ENCODE measurements at regions of chr15 and their contacts with region 1.

Region 1: DNA sequence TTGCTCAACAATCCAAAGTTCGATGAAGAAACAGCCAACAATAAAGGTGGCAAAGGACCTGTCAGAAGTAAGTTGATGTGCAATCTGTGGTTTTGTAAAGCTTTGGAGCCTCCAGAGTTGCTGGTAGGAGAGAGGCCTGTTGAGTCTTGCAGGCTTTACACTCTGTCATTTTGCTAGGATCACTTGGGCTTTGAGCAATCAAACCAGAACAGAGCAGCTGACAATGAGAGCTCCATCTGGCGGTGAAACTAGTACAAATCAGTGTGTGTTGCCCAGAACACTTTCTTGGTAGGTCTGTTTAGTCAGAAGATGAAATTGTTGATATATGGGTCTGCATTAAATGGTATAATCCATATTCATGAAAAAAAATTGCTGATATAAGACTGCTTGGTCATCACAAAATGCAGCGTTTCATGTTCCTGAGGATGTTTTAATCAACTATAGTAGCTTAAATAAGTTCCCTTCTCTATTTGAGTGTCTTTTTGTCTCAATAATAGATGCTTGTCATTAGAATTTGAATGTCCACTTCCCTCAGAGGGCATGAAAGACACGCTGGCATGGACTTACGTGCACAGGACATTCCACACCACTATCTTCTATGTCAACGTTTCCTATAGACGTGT is 25.7 kb downstream of the TMOD2 start:
- DNase-seq: peak; percentile 67
- ATAC-seq: peak; percentile 79
- H3K4me3 Mint-ChIP-seq: no peak overlapping the region
- H3K27ac Mint-ChIP-seq: no peak overlapping the region
- H3K4me1 Mint-ChIP-seq: peaks cover 5% of the 10 kb centered on the region
- H3K27me3 Mint-ChIP-seq: no peaks in the 10 kb centered on the region
- CTCF ChIP-seq: peak; percentile 49

Region 2: DNA sequence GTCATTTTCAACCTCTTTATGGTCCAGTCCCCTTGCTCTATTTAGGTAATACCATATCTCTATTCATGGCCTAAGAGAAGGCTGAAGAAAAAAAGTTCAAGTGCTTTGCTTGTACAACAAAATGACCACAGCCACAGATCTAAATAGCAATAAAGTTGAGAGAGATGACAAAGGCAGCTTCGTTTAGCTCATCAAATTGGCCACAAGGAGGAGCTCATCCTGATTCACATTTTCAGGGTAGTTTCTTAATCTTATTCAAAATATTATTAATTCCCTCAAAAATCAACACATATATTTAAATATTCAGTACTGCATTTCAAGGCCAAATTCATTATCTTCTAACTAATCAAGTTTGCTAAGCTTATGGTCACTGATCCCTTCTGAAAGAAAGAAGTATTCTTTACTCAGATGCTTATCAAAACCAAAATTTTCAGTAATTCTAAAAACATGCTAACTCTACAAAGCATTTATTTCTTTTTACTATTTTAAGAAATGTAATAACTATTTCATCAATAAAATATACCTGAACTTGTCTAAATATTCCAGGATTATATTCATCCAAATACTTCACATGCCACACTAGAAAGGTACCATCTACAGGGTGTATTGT is 240.0 kb before region 1 on chr15:
- CTCF ChIA-PET with region 1: interaction called, 15 read pairs
- POLR2A ChIA-PET with region 1: no interaction called
- DNase-seq: no peak
- ATAC-seq: no peak
- H3K4me3 Mint-ChIP-seq: no peak overlapping the region
- H3K27ac Mint-ChIP-seq: no peak overlapping the region
- H3K4me1 Mint-ChIP-seq: no peaks in the 10 kb centered on the region
- H3K27me3 Mint-ChIP-seq: no peaks in the 10 kb centered on the region
- CTCF ChIP-seq: peak; percentile 35; the same call in 1 of the 2 replicates

Region 3: GRCh38 chr15:51681303-51681963 is 95.6 kb before region 1 on chr15 and contains the start of gene SCG3:
- CTCF ChIA-PET with region 1: interaction called, 22 read pairs
- POLR2A ChIA-PET with region 1: no interaction called
- DNase-seq: peak; percentile 99
- ATAC-seq: peak; percentile 98
- H3K4me3 Mint-ChIP-seq: peak within 1 kb of the TSS; percentile 90
- H3K27ac Mint-ChIP-seq: peak within 1 kb of the TSS; percentile 97
- H3K4me1 Mint-ChIP-seq: peaks cover 6% of the 10 kb centered on the region
- H3K27me3 Mint-ChIP-seq: no peaks in the 10 kb centered on the region
- CTCF ChIP-seq: no peak
- total RNA-seq, gene SCG3: 31.5 to 32.3 TPM (median 32.1 TPM) in 3 replicates

Region 4: DNA sequence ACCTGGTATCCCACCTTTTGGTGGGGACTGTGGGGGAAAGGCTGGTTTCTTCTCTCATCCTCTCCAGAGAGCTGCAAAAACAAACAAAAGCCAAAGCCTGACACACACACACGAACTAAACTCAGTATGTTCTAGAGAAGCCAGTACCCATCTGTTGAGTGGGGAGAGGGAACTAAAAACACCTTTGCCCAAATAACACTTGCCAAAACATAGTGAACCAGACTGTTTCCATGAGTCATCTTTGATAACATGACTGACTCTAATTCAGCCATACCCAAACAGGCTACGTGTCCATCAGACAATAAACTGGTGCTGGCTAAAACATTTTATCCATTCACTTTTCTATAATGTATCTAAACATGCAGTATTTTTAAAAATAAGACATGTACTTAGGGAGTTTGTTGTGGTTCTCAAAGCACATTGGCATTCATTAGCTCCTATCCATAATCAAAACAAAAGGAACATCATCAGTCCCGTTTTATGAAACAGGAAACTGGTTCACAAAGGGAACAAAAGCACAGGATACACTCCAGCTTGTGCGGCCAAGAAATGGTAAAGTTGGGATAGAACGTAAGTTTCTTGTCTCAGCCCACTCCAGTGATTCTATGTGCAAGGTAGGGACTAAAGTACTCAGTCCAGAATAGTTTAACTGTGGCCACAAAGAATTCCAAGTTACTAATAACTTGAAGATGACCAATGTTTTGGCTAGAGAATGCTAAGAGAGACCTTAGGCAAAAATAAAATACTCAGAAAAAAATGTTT is 55.7 kb before region 1 on chr15:
- CTCF ChIA-PET with region 1: no interaction called
- POLR2A ChIA-PET with region 1: no interaction called
- DNase-seq: no peak
- ATAC-seq: no peak
- H3K4me3 Mint-ChIP-seq: no peak overlapping the region
- H3K27ac Mint-ChIP-seq: no peak overlapping the region
- H3K4me1 Mint-ChIP-seq: peaks cover 25% of the 10 kb centered on the region
- H3K27me3 Mint-ChIP-seq: no peaks in the 10 kb centered on the region
- CTCF ChIP-seq: no peak

Region 5: GRCh38 chr15:51737280-51738017 is 39.6 kb before region 1 on chr15 and contains the start of gene LYSMD2:
- CTCF ChIA-PET with region 1: interaction called, 12 read pairs
- POLR2A ChIA-PET with region 1: no interaction called
- DNase-seq: peak; percentile 52
- ATAC-seq: peak; percentile 63
- H3K4me3 Mint-ChIP-seq: peak within 1 kb of the TSS; percentile 71
- H3K27ac Mint-ChIP-seq: no peak within 1 kb of the TSS
- H3K4me1 Mint-ChIP-seq: peaks cover 13% of the 10 kb centered on the region
- H3K27me3 Mint-ChIP-seq: peaks cover 44% of the 10 kb centered on the region
- CTCF ChIP-seq: no peak
- total RNA-seq, gene LYSMD2: 2.2 to 2.7 TPM (median 2.6 TPM) in 3 replicates

Region 6: GRCh38 chr15:51809457-51809856 is 32.4 kb after region 1 on chr15:
- CTCF ChIA-PET with region 1: no interaction called
- POLR2A ChIA-PET with region 1: no interaction called
- DNase-seq: no peak
- ATAC-seq: no peak
- H3K4me3 Mint-ChIP-seq: no peak overlapping the region
- H3K27ac Mint-ChIP-seq: no peak overlapping the region
- H3K4me1 Mint-ChIP-seq: 0 out of 2 replicates have a peak, but pooled peaks cover 5% of the 10 kb centered on the region
- H3K27me3 Mint-ChIP-seq: no peaks in the 10 kb centered on the region
- CTCF ChIP-seq: no peak

Region 7: GRCh38 chr15:51853998-51854397 is 76.9 kb after region 1 on chr15:
- CTCF ChIA-PET with region 1: interaction called, 10 read pairs
- POLR2A ChIA-PET with region 1: no interaction called
- DNase-seq: no peak
- ATAC-seq: no peak
- H3K4me3 Mint-ChIP-seq: no peak overlapping the region
- H3K27ac Mint-ChIP-seq: no peak overlapping the region
- H3K4me1 Mint-ChIP-seq: peaks cover 38% of the 10 kb centered on the region
- H3K27me3 Mint-ChIP-seq: no peaks in the 10 kb centered on the region
- CTCF ChIP-seq: no peak

Region 8: DNA sequence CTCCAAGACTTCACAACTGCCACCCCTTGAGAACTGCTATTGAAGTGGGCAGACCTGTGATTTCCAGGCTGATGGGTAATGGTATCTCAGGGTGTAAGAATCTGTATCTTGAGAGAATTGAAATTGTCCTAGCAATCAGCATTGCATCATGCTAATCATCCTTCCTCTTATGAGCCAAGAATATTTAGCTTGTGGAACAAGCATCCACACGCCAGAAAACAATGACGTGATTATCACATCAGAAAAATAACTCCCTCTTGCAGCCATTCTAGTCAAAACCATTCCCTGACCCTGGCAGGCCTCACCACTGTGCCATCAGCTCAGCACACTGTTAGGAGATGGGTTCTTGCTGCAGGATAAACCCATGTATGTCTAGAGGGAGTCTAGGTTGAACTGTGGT is 328.8 kb after region 1 on chr15:
- CTCF ChIA-PET with region 1: no interaction called
- POLR2A ChIA-PET with region 1: no interaction called
- DNase-seq: no peak
- ATAC-seq: no peak
- H3K4me3 Mint-ChIP-seq: no peak overlapping the region
- H3K27ac Mint-ChIP-seq: no peak overlapping the region
- H3K4me1 Mint-ChIP-seq: peaks cover 20% of the 10 kb centered on the region
- H3K27me3 Mint-ChIP-seq: peaks cover 17% of the 10 kb centered on the region
- CTCF ChIP-seq: no peak

Region 9: DNA sequence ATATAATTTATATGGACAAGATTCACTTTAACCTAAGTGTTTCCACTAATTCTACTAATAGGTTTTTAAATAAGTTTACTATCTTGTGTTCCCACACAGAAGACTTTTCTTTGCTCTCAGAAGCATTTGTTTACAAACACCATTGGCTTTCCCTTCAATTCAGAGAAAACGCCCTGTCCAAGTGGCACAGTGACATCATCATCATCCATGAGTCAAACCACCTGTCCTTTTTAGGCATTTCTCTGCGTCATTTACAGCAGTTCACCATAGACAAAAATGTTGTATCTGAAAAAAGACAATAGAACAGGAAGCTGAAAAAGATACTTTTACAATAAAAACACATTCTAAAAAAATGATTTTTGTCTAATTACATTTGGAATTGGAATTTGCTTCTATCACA is 344.8 kb after region 1 on chr15:
- CTCF ChIA-PET with region 1: no interaction called
- POLR2A ChIA-PET with region 1: no interaction called
- DNase-seq: no peak
- ATAC-seq: no peak
- H3K4me3 Mint-ChIP-seq: no peak overlapping the region
- H3K27ac Mint-ChIP-seq: no peak overlapping the region
- H3K4me1 Mint-ChIP-seq: peaks cover 13% of the 10 kb centered on the region
- H3K27me3 Mint-ChIP-seq: no peaks in the 10 kb centered on the region
- CTCF ChIP-seq: no peak